Mammary epithelial cell (primary cell): ENCODE measurements at regions of chr20 and their contacts with region 1.

Region 1: GRCh38 chr20:53216856-53217576 is 244.9 kb downstream of the TSHZ2 start:
- DNase-seq: peak; percentile 37
- H3K4me3 ChIP-seq: peak overlapping the region in 1 of 3 experiments; percentile 11
- H3K27ac ChIP-seq: no peak overlapping the region
- H3K4me1 ChIP-seq: no peaks in the 10 kb centered on the region
- H3K27me3 ChIP-seq: no peaks in the 10 kb centered on the region
- CTCF ChIP-seq: peak; percentile 57 to 93

Region 2: DNA sequence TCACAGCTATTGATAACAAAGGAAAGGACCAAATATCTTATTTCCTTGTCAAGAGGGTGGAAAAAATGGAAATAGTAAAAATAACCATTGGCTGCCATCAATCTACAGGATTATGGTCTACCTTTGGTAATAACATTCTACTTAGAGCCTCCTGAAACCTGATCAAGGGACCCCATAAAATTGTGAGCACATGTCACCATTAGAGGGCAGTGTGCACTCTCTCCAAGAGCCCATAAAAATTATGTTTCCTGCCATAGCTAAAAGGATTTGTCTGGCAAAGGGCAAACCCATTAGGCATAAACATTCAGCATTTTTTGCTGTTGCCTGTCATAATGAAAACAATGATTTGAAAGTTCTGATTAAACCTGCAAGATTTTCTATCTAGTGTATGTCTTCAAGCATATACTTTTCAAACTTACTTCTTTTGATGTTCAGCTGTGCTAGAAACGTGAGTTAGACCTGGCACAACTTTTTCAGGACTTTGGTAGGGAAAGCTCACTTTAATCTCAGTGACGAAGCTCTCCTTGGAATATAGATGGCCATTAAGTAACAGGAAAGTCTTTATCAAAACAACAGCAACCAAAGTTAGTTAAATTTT is 904.8 kb before region 1 on chr20:
- CTCF ChIA-PET with region 1: no interaction called
- dilution Hi-C with region 1: no loop called
- in situ Hi-C with region 1: loop called in 1 of 2 experiments (anchors 25 kb)
- intact Hi-C with region 1: loop called (anchors 1 kb)
- DNase-seq: peak; percentile 32
- H3K4me3 ChIP-seq: no peak overlapping the region
- H3K27ac ChIP-seq: no peak overlapping the region
- H3K4me1 ChIP-seq: no peaks in the 10 kb centered on the region
- H3K27me3 ChIP-seq: no peaks in the 10 kb centered on the region
- CTCF ChIP-seq: peak; percentile 73 to 80

Region 3: DNA sequence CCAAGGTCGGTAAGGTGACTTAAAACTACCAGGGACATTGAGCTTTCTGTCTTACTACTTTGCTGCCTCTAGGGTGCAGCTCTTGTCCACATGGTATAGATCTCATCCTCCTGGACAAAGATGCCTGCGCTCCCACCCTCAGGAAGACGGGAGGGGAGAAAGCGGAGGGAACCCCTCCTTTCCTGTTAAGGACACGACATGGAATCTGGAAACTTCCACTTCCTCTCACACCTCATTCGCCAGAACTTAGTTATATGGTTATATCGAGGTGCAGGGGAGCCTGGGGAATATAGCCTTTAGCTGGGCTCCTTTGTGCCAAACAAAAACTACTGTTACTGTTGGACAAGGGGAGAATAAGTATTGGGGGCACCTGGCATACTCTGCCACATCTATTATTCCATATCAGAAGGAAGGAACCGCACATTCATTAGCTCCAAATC is 469.2 kb before region 1 on chr20:
- CTCF ChIA-PET with region 1: interaction called, 4 read pairs
- dilution Hi-C with region 1: no loop called
- in situ Hi-C with region 1: no loop called
- intact Hi-C with region 1: loop called (anchors 1 kb)
- DNase-seq: no peak
- H3K4me3 ChIP-seq: no peak overlapping the region
- H3K27ac ChIP-seq: no peak overlapping the region
- H3K4me1 ChIP-seq: peaks cover 3% of the 10 kb centered on the region
- H3K27me3 ChIP-seq: no peaks in the 10 kb centered on the region
- CTCF ChIP-seq: peak; percentile 30 to 69

Region 4: GRCh38 chr20:52923123-52923937 is 293.7 kb before region 1 on chr20:
- CTCF ChIA-PET with region 1: no interaction called
- dilution Hi-C with region 1: no loop called
- in situ Hi-C with region 1: no loop called
- intact Hi-C with region 1: loop called (anchors 2 kb)
- DNase-seq: peak; percentile 99
- H3K4me3 ChIP-seq: no peak overlapping the region
- H3K27ac ChIP-seq: peak overlapping the region; percentile 91
- H3K4me1 ChIP-seq: peaks cover 28% of the 10 kb centered on the region
- H3K27me3 ChIP-seq: no peaks in the 10 kb centered on the region
- CTCF ChIP-seq: peak in 1 of 2 donors; percentile 18

Region 5: GRCh38 chr20:52978851-52979250 is 238.2 kb before region 1 on chr20:
- CTCF ChIA-PET with region 1: no interaction called
- dilution Hi-C with region 1: no loop called
- in situ Hi-C with region 1: no loop called
- intact Hi-C with region 1: loop called (anchors 1 kb)
- DNase-seq: peak; percentile 48
- H3K4me3 ChIP-seq: peak overlapping the region; percentile 32 to 92 (median 41)
- H3K27ac ChIP-seq: peak overlapping the region; percentile 88
- H3K4me1 ChIP-seq: peaks cover 20% of the 10 kb centered on the region
- H3K27me3 ChIP-seq: no peaks in the 10 kb centered on the region
- CTCF ChIP-seq: no peak

Region 6: DNA sequence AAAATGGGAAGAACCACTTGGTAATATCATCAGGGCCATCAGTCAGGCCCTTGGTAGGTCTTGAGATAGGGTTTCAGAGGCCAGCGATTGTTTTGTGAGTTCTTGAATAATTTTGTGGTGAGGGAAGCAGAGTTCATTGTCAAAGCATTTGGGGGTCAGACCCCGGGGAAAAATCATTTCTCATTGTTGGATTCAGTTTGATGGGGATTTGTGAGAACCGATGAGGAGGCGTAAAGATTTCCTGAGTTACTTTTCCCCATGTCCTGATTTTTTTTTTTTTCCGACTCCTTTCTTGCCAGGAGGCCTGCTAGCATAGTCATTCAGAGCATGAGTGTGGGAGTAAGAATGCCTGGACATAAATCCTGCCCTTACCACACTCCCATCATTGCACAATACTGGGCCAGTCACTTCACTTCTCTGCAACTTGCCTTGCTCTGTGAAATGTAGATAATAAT is 184.5 kb before region 1 on chr20:
- CTCF ChIA-PET with region 1: no interaction called
- dilution Hi-C with region 1: no loop called
- in situ Hi-C with region 1: no loop called
- intact Hi-C with region 1: loop called (anchors 2 kb)
- DNase-seq: peak; percentile 87
- H3K4me3 ChIP-seq: no peak overlapping the region
- H3K27ac ChIP-seq: peak overlapping the region; percentile 40
- H3K4me1 ChIP-seq: peaks cover 27% of the 10 kb centered on the region
- H3K27me3 ChIP-seq: no peaks in the 10 kb centered on the region
- CTCF ChIP-seq: no peak

Region 7: GRCh38 chr20:53547664-53548239 is 330.7 kb after region 1 on chr20:
- CTCF ChIA-PET with region 1: no interaction called
- dilution Hi-C with region 1: no loop called
- in situ Hi-C with region 1: no loop called
- intact Hi-C with region 1: loop called (anchors 5 kb)
- DNase-seq: peak; percentile 41
- H3K4me3 ChIP-seq: no peak overlapping the region
- H3K27ac ChIP-seq: no peak overlapping the region
- H3K4me1 ChIP-seq: no peaks in the 10 kb centered on the region
- H3K27me3 ChIP-seq: no peaks in the 10 kb centered on the region
- CTCF ChIP-seq: peak; percentile 85 to 87